ENCODE measurements at regions of chr21 and their contacts with region 1.

Region 1: GRCh38 chr21:45140346-45140940 is 66.1 kb downstream of the ADARB1 start:
- DNase-seq: no peak
- ATAC-seq: peak; percentile 98
- H3K4me3 ChIP-seq: no peak overlapping the region
- H3K27ac ChIP-seq: no peak overlapping the region
- H3K4me1 ChIP-seq: no peaks in the 10 kb centered on the region
- H3K27me3 ChIP-seq: peaks cover 0 to 9% of the 10 kb centered on the region in 2 experiments; a peak in 1 of 4 replicates
- CTCF ChIP-seq: peak; percentile 86 to 98 (median 90); a peak in 5 of 6 replicates
- EP300 ChIP-seq: no peak
- POLR2A ChIP-seq: no peak
- RAD21 ChIP-seq: peak; percentile 90

Region 2: DNA sequence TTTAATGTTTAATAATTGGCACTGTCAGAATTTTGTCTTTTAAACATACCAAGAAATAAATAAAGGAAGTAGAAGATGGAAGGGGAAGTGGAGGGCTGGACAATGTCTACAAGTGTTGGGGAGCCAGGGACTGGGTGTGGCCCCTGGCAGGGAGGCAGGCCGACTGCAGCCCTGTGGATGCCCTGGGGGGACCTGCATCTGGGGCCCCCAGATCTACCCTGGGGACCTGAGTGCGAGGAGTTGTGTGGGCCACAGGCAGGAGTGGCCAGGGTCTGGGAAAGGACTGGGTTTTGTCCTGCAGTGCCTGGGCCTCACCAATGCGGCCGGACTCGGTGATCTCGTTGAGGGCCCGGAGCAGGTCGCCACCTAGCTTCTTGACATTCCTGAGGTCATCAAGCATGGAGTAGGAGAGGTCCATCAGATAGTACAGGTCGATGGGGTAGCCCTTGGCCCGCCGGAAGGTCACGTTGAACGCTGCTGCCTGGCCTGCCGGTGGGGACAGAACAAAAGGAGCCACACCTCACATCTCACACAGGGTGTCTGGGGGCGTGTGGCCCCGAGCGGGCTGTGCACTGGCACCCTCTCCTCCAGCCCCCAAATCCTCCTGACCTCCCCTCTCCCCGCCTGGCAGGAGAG is 237.3 kb before region 1 on chr21:
- CTCF ChIA-PET with region 1: no interaction called
- POLR2A ChIA-PET with region 1: no interaction called
- RAD21 ChIA-PET with region 1: no interaction called
- SMC1A ChIA-PET with region 1: no interaction called
- in situ Hi-C with region 1: no loop called
- intact Hi-C with region 1: no loop called
- DNase-seq: no peak
- ATAC-seq: no peak
- H3K4me3 ChIP-seq: no peak overlapping the region
- H3K27ac ChIP-seq: no peak overlapping the region
- H3K4me1 ChIP-seq: peaks cover 3% of the 10 kb centered on the region
- H3K27me3 ChIP-seq: no peaks in the 10 kb centered on the region
- CTCF ChIP-seq: no peak
- EP300 ChIP-seq: no peak
- POLR2A ChIP-seq: no peak
- RAD21 ChIP-seq: no peak

Region 3: GRCh38 chr21:44939532-44940115 is 200.8 kb before region 1 on chr21 and contains the start of gene SLX9:
- CTCF ChIA-PET with region 1: interaction called, 219 read pairs
- POLR2A ChIA-PET with region 1: interaction called, 3 read pairs
- RAD21 ChIA-PET with region 1: interaction called, 4 read pairs
- SMC1A ChIA-PET with region 1: interaction called, 21 read pairs
- in situ Hi-C with region 1: no loop called
- intact Hi-C with region 1: no loop called
- DNase-seq: no peak
- ATAC-seq: peak; percentile 92
- H3K4me3 ChIP-seq: peak within 1 kb of the TSS; percentile 92
- H3K27ac ChIP-seq: peak within 1 kb of the TSS; percentile 50
- H3K4me1 ChIP-seq: peaks cover 18% of the 10 kb centered on the region
- H3K27me3 ChIP-seq: no peaks in the 10 kb centered on the region
- CTCF ChIP-seq: no peak
- EP300 ChIP-seq: no peak
- POLR2A ChIP-seq: peak; percentile 88
- RAD21 ChIP-seq: no peak
- polyA plus RNA-seq, gene SLX9: 0.69 to 5.5 TPM

Region 4: DNA sequence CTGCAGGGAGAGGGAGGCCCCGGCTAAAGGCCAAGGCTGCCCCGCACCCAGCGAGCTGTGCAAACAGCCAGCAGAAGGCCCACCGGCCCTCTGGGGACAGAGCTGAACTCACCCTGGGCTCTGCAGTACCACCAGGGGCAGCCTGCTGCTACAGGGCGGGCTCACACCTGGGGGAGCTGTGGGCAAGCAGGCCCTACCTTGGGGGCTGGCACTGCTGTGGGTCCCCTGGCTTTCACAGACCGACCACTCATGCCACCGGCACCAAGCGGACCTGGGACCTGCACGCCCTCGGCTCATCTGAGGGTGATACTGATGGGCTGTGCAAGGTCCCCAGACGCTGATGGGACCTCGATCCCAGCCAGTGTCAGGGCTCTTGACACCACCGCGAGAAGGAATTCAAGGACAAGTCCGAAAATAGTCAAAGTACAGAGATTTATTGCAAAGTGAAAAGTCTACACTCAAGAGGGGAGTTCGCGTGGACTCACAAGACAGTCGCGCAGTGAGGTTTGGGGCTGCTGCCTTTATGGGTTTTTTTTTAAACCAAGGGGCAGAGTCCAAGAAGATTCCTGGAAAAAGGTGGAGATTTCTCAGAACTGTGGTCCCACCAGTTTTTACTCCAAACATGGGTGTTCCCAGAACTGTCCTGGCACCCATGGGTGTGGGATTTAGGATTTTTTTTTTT is 127.0 kb before region 1 on chr21:
- CTCF ChIA-PET with region 1: interaction called, 14 read pairs
- POLR2A ChIA-PET with region 1: no interaction called
- RAD21 ChIA-PET with region 1: interaction called, 3 read pairs
- SMC1A ChIA-PET with region 1: no interaction called
- in situ Hi-C with region 1: no loop called
- intact Hi-C with region 1: no loop called
- DNase-seq: no peak
- ATAC-seq: peak; percentile 35
- H3K4me3 ChIP-seq: no peak overlapping the region
- H3K27ac ChIP-seq: no peak overlapping the region
- H3K4me1 ChIP-seq: no peaks in the 10 kb centered on the region
- H3K27me3 ChIP-seq: peaks cover 3 to 5% of the 10 kb centered on the region in 2 experiments; a peak in 3 of 4 replicates
- CTCF ChIP-seq: no peak
- EP300 ChIP-seq: no peak
- POLR2A ChIP-seq: no peak
- RAD21 ChIP-seq: no peak

Region 5: DNA sequence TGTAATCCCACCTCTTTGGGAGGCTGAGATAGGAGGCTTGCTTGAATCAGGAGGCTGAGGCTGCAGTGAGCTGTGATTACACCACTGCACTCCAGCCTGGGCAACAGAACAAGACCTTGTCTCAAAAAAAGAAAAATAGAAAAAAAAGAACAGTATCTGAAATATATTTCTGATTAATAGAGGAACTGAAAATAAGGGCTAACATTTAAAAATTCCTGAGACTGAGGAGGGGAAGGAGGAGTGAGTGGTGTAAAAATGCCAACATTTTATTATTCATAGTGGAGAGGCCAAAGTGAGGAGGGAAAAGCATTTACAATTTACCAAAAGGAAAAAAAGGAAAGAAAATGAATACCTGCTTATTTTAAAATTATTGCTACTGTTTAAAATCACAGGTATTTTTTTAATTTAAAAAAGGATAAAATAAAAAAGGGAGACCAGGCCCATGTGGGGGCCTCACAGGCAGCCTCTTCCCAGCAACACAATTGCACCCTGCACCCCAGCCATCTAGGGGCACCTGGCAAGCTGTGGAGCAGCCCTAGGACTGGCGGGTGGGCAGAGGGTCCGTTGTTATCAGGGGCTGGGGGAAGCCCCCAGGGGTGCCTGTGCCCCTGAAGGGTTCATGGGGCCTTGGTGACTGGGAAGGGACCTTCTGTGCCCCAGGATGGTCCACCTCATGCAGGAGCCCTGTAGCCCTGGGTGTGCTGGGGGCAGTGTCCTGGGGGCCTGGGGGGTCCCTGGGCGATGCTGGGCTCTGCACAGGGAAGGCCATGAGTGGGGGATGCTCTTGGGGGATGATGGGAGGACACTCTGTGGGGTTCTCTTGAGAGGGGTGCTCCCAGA is 100.9 kb before region 1 on chr21:
- CTCF ChIA-PET with region 1: no interaction called
- POLR2A ChIA-PET with region 1: no interaction called
- RAD21 ChIA-PET with region 1: no interaction called
- SMC1A ChIA-PET with region 1: no interaction called
- in situ Hi-C with region 1: no loop called
- intact Hi-C with region 1: no loop called
- DNase-seq: no peak
- ATAC-seq: no peak
- H3K4me3 ChIP-seq: no peak overlapping the region
- H3K27ac ChIP-seq: no peak overlapping the region
- H3K4me1 ChIP-seq: no peaks in the 10 kb centered on the region
- H3K27me3 ChIP-seq: no peaks in the 10 kb centered on the region; a peak in 2 of 4 replicates
- CTCF ChIP-seq: no peak
- EP300 ChIP-seq: no peak
- POLR2A ChIP-seq: no peak
- RAD21 ChIP-seq: no peak

Region 6: DNA sequence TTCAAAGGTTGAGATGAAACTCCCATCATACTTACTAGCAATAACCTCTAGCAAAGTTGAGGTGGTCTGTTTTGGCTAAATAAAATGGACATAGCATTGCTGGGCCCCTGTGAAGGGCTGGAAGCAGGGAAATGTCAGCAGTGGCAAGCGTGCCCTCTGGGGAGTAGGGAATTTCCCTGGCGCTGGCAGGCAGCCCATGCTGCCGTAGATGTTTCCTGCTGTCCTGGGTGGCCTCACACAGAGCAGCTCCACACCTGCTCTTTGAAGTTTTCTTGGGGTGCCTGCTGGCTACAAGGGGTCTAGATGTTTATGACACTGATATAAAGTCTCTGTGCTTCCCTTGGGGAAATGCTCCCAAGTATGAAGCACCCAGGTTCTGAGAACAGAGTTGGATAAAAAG is 35.9 kb before region 1 on chr21:
- CTCF ChIA-PET with region 1: interaction called, 173 read pairs
- POLR2A ChIA-PET with region 1: interaction called, 9 read pairs
- RAD21 ChIA-PET with region 1: interaction called, 40 read pairs
- SMC1A ChIA-PET with region 1: interaction called, 31 read pairs
- in situ Hi-C with region 1: no loop called
- intact Hi-C with region 1: loop called (anchors 2 kb)
- DNase-seq: no peak
- ATAC-seq: peak; percentile 86
- H3K4me3 ChIP-seq: no peak overlapping the region; the same call in 1 of the 2 replicates
- H3K27ac ChIP-seq: no peak overlapping the region
- H3K4me1 ChIP-seq: peaks cover 28% of the 10 kb centered on the region
- H3K27me3 ChIP-seq: no peaks in the 10 kb centered on the region
- CTCF ChIP-seq: no peak
- EP300 ChIP-seq: no peak
- POLR2A ChIP-seq: no peak
- RAD21 ChIP-seq: no peak

Region 7: GRCh38 chr21:45167796-45168222 is 27.4 kb after region 1 on chr21:
- CTCF ChIA-PET with region 1: interaction called, 18 read pairs
- POLR2A ChIA-PET with region 1: no interaction called
- RAD21 ChIA-PET with region 1: interaction called, 4 read pairs
- SMC1A ChIA-PET with region 1: interaction called, 5 read pairs
- in situ Hi-C with region 1: no loop called
- intact Hi-C with region 1: no loop called
- DNase-seq: no peak
- ATAC-seq: no peak
- H3K4me3 ChIP-seq: no peak overlapping the region
- H3K27ac ChIP-seq: no peak overlapping the region
- H3K4me1 ChIP-seq: no peaks in the 10 kb centered on the region
- H3K27me3 ChIP-seq: no peaks in the 10 kb centered on the region
- CTCF ChIP-seq: no peak
- EP300 ChIP-seq: no peak
- POLR2A ChIP-seq: no peak
- RAD21 ChIP-seq: no peak

Region 8: DNA sequence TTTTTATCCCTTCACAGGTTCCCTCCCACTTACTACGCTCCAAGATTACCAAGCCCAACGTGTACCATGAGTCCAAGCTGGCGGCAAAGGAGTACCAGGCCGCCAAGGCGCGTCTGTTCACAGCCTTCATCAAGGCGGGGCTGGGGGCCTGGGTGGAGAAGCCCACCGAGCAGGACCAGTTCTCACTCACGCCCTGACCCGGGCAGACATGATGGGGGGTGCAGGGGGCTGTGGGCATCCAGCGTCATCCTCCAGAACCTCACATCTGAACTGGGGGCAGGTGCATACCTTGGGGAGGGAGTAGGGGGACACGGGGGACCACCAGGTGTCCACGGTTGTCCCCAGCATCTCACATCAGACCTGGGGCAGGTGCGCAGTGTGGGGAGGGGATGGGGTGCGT is 81.6 kb after region 1 on chr21:
- CTCF ChIA-PET with region 1: no interaction called
- POLR2A ChIA-PET with region 1: no interaction called
- RAD21 ChIA-PET with region 1: no interaction called
- SMC1A ChIA-PET with region 1: no interaction called
- in situ Hi-C with region 1: no loop called
- intact Hi-C with region 1: no loop called
- DNase-seq: no peak
- ATAC-seq: no peak
- H3K4me3 ChIP-seq: no peak overlapping the region
- H3K27ac ChIP-seq: no peak overlapping the region
- H3K4me1 ChIP-seq: no peaks in the 10 kb centered on the region
- H3K27me3 ChIP-seq: no peaks in the 10 kb centered on the region
- CTCF ChIP-seq: no peak
- EP300 ChIP-seq: no peak
- POLR2A ChIP-seq: no peak
- RAD21 ChIP-seq: no peak

Region 9: GRCh38 chr21:45309069-45309986 is 168.9 kb after region 1 on chr21:
- CTCF ChIA-PET with region 1: interaction called, 16 read pairs
- POLR2A ChIA-PET with region 1: no interaction called
- RAD21 ChIA-PET with region 1: interaction called, 11 read pairs
- SMC1A ChIA-PET with region 1: interaction called, 3 read pairs
- in situ Hi-C with region 1: no loop called
- intact Hi-C with region 1: no loop called
- DNase-seq: no peak
- ATAC-seq: peak; percentile 69
- H3K4me3 ChIP-seq: no peak overlapping the region
- H3K27ac ChIP-seq: no peak overlapping the region
- H3K4me1 ChIP-seq: no peaks in the 10 kb centered on the region
- H3K27me3 ChIP-seq: peaks cover 0 to 1% of the 10 kb centered on the region in 2 experiments; a peak in 1 of 4 replicates
- CTCF ChIP-seq: peak; percentile 46 to 51 (median 50); a peak in 5 of 6 replicates
- EP300 ChIP-seq: no peak
- POLR2A ChIP-seq: no peak
- RAD21 ChIP-seq: no peak

Measured in GM12878 (cell line).